PC-3 (cell line): ENCODE measurements at regions of chr9 and their contacts with region 1.

Region 1: GRCh38 chr9:34611829-34612630 is at the start of gene RPP25L:
- DNase-seq: peak; percentile 86
- ATAC-seq: peak; percentile 91
- H3K4me3 ChIP-seq: peak within 1 kb of the TSS; percentile 87
- H3K27ac ChIP-seq: peak within 1 kb of the TSS; percentile 32; the same call in 1 of the 2 replicates
- H3K4me1 ChIP-seq: peaks cover 15% of the 10 kb centered on the region; the same call in 1 of the 2 replicates
- H3K27me3 ChIP-seq: no peaks in the 10 kb centered on the region
- CTCF ChIP-seq: no peak
- total RNA-seq, gene RPP25L: 25.0 and 30.2 TPM in 2 replicates

Region 2: GRCh38 chr9:34633851-34634550 is 22.0 kb after region 1 on chr9:
- CTCF ChIA-PET with region 1: interaction called, 4 read pairs
- POLR2A ChIA-PET with region 1: no interaction called
- intact Hi-C with region 1: loop called (anchors 1 kb)
- DNase-seq: peak; percentile 56
- ATAC-seq: peak; percentile 42
- H3K4me3 ChIP-seq: no peak overlapping the region
- H3K27ac ChIP-seq: no peak overlapping the region
- H3K4me1 ChIP-seq: peaks cover 5% of the 10 kb centered on the region; the same call in 1 of the 2 replicates
- H3K27me3 ChIP-seq: peaks cover 7% of the 10 kb centered on the region
- CTCF ChIP-seq: peak; percentile 82